GM13977 (cell line): ENCODE measurements at regions of chr7 and their contacts with region 1.

Region 1: GRCh38 chr7:24965831-24966709 is 13.9 kb downstream of the OSBPL3 start:
- DNase-seq: peak; percentile 65
- CTCF ChIP-seq: no peak

Region 2: GRCh38 chr7:24129597-24129996 is 836.5 kb before region 1 on chr7:
- in situ Hi-C with region 1: no loop called
- DNase-seq: no peak
- CTCF ChIP-seq: no peak

Region 3: GRCh38 chr7:24595671-24596418 is 370.2 kb before region 1 on chr7:
- in situ Hi-C with region 1: no loop called
- DNase-seq: no peak
- CTCF ChIP-seq: no peak

Region 4: GRCh38 chr7:24907311-24907886 is 58.7 kb before region 1 on chr7:
- in situ Hi-C with region 1: loop called (anchors 10 kb)
- DNase-seq: no peak
- CTCF ChIP-seq: no peak